B cell (primary cell): ENCODE measurements at regions of chr1 and their contacts with region 1.

Region 1: GRCh38 chr1:111769517-111770146 is 13.9 kb downstream of the DDX20 start:
- DNase-seq: peak; percentile 78
- ATAC-seq: peak; percentile 51
- H3K4me3 ChIP-seq: no peak overlapping the region
- H3K4me3 Mint-ChIP-seq: no peak overlapping the region
- H3K27ac ChIP-seq: no peak overlapping the region
- H3K27ac Mint-ChIP-seq: no peak overlapping the region
- H3K4me1 ChIP-seq: no peaks in the 10 kb centered on the region
- H3K4me1 Mint-ChIP-seq: no peaks in the 10 kb centered on the region
- H3K27me3 ChIP-seq: no peaks in the 10 kb centered on the region
- H3K27me3 Mint-ChIP-seq: no peaks in the 10 kb centered on the region
- CTCF ChIP-seq: peak; percentile 95

Region 2: GRCh38 chr1:111366256-111366655 is 403.4 kb before region 1 on chr1:
- CTCF ChIA-PET with region 1: no interaction called
- POLR2A ChIA-PET with region 1: no interaction called
- intact Hi-C with region 1: no loop called
- DNase-seq: no peak
- ATAC-seq: no peak
- H3K4me3 ChIP-seq: no peak overlapping the region
- H3K4me3 Mint-ChIP-seq: no peak overlapping the region
- H3K27ac ChIP-seq: no peak overlapping the region
- H3K27ac Mint-ChIP-seq: no peak overlapping the region
- H3K4me1 ChIP-seq: no peaks in the 10 kb centered on the region
- H3K4me1 Mint-ChIP-seq: no peaks in the 10 kb centered on the region
- H3K27me3 ChIP-seq: peaks cover 0 to 10% (median 8%) of the 10 kb centered on the region in 4 experiments
- H3K27me3 Mint-ChIP-seq: peaks cover 44% of the 10 kb centered on the region
- CTCF ChIP-seq: no peak

Region 3: DNA sequence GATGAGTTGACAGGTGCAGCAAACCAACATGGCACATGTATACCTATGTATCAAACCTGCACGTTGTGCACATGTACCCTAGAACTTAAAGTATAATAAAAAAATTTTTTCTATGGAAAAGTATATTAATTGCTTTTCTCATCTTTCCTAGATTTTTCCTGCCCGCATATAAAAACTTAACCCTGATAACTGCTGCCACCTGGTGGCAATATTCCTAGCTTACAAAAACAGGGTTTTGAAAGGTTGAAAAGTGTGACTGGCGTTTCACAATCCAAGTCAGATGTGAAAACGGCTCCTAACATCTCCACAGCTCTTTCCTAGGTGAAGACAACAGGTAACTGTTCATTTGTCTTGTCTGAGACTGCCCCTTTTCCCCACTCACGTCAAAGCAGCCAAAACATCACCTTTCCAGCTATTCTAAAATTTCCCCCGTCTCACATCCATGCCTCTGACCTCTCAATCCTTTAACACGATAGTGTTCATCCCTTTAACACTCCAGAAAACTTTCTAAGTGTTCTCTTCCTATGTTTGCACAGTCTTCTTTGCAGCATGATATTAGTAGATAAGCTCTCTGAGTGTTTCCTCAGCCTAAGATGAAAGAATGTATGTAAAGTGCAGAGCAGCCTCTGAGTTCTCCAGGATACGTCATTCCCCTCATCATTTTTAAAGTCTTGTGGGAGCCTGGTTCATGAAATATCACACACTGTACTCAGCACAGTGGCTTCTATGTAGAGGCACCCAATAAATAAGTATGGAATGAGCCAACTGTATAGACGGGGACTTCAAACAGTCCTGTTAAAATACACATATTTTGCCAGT is 369.6 kb before region 1 on chr1:
- CTCF ChIA-PET with region 1: interaction called, 16 read pairs
- POLR2A ChIA-PET with region 1: no interaction called
- intact Hi-C with region 1: no loop called
- DNase-seq: peak; percentile 61
- ATAC-seq: no peak
- H3K4me3 ChIP-seq: no peak overlapping the region
- H3K4me3 Mint-ChIP-seq: no peak overlapping the region
- H3K27ac ChIP-seq: no peak overlapping the region
- H3K27ac Mint-ChIP-seq: peak overlapping the region; percentile 8
- H3K4me1 ChIP-seq: peaks cover 12 to 15% of the 10 kb centered on the region in 2 donors
- H3K4me1 Mint-ChIP-seq: peaks cover 24% of the 10 kb centered on the region
- H3K27me3 ChIP-seq: no peaks in the 10 kb centered on the region
- H3K27me3 Mint-ChIP-seq: no peaks in the 10 kb centered on the region
- CTCF ChIP-seq: peak; percentile 70

Region 4: DNA sequence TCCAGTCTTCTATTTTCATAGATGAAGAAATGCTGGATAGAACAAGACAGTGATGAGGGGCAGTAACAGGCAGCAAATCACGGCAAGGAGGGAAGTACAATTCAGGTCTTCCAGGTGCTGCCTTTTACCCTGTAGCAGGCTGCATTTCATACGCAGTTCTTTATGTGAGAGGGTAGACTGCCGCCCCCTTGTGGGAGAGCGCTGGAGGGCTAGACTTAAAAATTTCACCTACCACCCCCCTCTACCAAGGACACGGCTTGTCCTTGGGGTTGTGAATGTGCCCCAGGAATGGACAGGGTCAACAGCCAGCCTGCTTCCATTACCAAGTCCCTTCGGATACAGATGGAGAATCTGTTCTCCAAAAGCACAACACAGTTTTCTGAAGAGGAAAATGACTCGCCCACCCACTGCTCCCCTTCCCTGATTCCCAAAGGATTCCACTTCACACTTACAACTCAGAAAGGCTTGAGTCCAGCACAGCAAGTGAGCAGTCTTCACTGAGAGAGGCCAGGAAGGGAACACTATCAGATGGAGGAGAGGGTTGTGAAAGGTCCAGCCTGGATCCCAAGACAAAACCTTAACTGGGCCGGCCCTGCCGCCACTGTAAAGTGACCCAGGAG is 327.9 kb before region 1 on chr1:
- CTCF ChIA-PET with region 1: interaction called, 5 read pairs
- POLR2A ChIA-PET with region 1: no interaction called
- intact Hi-C with region 1: loop called (anchors 1 kb)
- DNase-seq: peak; percentile 79
- ATAC-seq: peak; percentile 92
- H3K4me3 ChIP-seq: no peak overlapping the region
- H3K4me3 Mint-ChIP-seq: no peak overlapping the region
- H3K27ac ChIP-seq: peak overlapping the region in 1 of 2 donors; percentile 39
- H3K27ac Mint-ChIP-seq: peak overlapping the region; percentile 27
- H3K4me1 ChIP-seq: peaks cover 0 to 4% of the 10 kb centered on the region in 2 donors
- H3K4me1 Mint-ChIP-seq: peaks cover 16% of the 10 kb centered on the region
- H3K27me3 ChIP-seq: no peaks in the 10 kb centered on the region
- H3K27me3 Mint-ChIP-seq: no peaks in the 10 kb centered on the region
- CTCF ChIP-seq: peak; percentile 84

Region 5: DNA sequence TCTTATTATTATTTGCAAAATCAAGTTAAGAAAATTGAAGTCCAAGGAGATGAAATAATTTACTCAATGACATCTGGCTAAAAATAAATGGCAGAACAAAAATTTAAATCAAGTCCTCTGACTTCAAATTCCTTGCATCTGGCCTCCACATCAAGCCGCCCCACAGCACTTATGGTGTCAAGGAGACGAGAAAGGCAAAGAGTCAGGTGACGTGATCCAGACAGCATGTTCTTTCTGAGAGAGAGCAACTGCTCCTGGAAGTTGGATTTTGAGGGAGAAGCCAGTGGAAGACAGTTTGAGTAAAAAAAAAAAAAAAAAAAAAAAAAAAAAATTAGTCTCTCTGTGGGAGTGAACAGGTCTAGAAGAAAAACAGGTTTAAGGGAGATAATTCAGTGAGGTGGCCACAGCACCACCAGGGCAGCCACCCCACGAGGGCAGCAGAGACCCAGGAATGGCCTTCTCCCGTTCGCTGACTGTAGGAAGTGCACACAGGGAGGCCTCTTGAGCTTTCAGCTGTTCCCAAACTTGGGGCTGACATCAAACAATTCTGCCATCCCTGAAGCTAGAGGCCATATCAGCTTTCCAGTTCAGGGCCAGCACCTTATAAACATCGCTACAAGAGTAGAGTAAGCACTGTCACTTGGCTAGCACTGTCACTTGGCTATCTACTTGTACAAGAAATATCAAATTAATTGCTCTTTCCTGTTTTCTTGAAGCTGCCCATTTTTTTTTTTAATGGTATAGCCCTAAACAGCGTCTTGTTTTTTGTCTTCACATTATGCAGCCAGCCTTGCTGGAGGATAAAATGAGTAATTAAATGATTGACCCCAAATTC is 288.0 kb before region 1 on chr1:
- CTCF ChIA-PET with region 1: interaction called, 71 read pairs
- POLR2A ChIA-PET with region 1: no interaction called
- intact Hi-C with region 1: loop called (anchors 1 kb)
- DNase-seq: peak; percentile 76
- ATAC-seq: peak; percentile 52
- H3K4me3 ChIP-seq: no peak overlapping the region
- H3K4me3 Mint-ChIP-seq: no peak overlapping the region
- H3K27ac ChIP-seq: no peak overlapping the region
- H3K27ac Mint-ChIP-seq: peak overlapping the region; percentile 43
- H3K4me1 ChIP-seq: peaks cover 38 to 42% of the 10 kb centered on the region in 2 donors
- H3K4me1 Mint-ChIP-seq: peaks cover 46% of the 10 kb centered on the region
- H3K27me3 ChIP-seq: no peaks in the 10 kb centered on the region
- H3K27me3 Mint-ChIP-seq: no peaks in the 10 kb centered on the region
- CTCF ChIP-seq: peak; percentile 55

Region 6: DNA sequence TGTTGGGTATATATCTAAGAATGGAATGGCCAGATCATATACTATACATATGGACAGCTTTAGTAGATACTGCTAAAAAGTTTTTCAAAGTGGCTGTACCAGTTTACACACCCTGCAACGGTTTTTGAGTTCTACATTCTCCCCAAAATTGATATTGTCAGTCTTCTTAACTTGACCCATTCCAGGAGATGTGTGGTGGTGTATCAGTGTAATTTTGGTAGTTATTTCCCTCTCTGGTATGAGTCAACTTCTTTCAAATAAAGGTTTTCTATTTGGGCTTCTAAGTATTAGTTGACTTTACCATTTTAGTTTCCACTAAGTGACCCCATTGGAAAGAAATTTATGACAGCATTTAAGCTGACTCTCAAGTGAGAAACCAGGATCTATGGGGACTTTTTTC is 59.6 kb before region 1 on chr1:
- CTCF ChIA-PET with region 1: interaction called, 198 read pairs
- POLR2A ChIA-PET with region 1: no interaction called
- intact Hi-C with region 1: loop called (anchors 1 kb)
- DNase-seq: no peak
- ATAC-seq: no peak
- H3K4me3 ChIP-seq: no peak overlapping the region
- H3K4me3 Mint-ChIP-seq: no peak overlapping the region
- H3K27ac ChIP-seq: peak overlapping the region in 1 of 2 donors; percentile 21
- H3K27ac Mint-ChIP-seq: no peak overlapping the region
- H3K4me1 ChIP-seq: no peaks in the 10 kb centered on the region
- H3K4me1 Mint-ChIP-seq: no peaks in the 10 kb centered on the region
- H3K27me3 ChIP-seq: no peaks in the 10 kb centered on the region
- H3K27me3 Mint-ChIP-seq: no peaks in the 10 kb centered on the region
- CTCF ChIP-seq: no peak

Region 7: DNA sequence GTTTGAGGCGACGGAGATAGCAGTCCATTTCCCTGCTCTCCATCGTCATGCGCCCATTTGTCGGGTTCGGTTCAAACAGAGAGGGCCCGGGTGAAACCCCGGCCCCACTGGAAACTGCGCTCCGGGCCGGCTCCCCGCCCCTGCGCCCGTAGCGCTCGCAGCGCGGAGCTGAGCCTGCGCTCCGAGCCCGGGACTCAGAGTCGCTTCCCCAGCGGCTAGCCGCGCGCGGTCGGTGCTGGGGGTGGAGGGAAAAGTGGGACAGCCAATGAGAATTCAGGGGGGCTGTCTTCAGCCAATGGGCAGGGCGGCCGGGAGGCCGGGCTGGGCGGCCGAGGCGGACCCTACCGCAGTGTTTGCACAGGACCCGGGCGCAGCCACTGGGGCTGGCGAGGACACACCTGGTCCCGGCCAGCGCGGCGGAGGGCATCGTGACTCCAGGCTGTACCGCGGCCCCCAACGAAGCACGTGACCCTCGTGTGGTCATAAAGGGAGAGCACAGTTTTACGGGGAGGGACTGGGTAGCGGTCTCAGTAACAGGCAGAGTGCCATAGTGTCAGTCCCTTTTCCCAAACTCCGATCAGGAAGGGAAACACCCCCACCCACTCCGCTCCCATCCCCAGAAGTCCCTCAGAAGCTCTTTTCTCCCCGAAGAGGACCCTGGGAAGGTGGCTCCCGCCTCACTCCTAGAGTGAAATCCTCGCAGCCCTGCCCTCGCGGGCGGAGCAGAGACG is 30.3 kb before region 1 on chr1 and contains the start of gene INKA2:
- CTCF ChIA-PET with region 1: interaction called, 14 read pairs
- POLR2A ChIA-PET with region 1: no interaction called
- intact Hi-C with region 1: loop called (anchors 1 kb)
- DNase-seq: peak; percentile 89
- ATAC-seq: peak; percentile 75
- H3K4me3 ChIP-seq: peak within 1 kb of the TSS; percentile 67 to 81 (median 72)
- H3K4me3 Mint-ChIP-seq: peak within 1 kb of the TSS; percentile 97
- H3K27ac ChIP-seq: peak within 1 kb of the TSS; percentile 60 to 73
- H3K27ac Mint-ChIP-seq: peak within 1 kb of the TSS; percentile 91
- H3K4me1 ChIP-seq: peaks cover 15 to 25% of the 10 kb centered on the region in 2 donors
- H3K4me1 Mint-ChIP-seq: peaks cover 23% of the 10 kb centered on the region
- H3K27me3 ChIP-seq: peaks cover 0 to 39% (median 15%) of the 10 kb centered on the region in 4 experiments
- H3K27me3 Mint-ChIP-seq: peaks cover 6% of the 10 kb centered on the region
- CTCF ChIP-seq: no peak
- total RNA-seq, gene INKA2: 6.4 and 6.5 TPM in 2 replicates

Region 8: GRCh38 chr1:111755331-111756123 is 14.1 kb before region 1 on chr1 and contains the start of gene DDX20:
- CTCF ChIA-PET with region 1: interaction called, 10 read pairs
- POLR2A ChIA-PET with region 1: no interaction called
- intact Hi-C with region 1: loop called (anchors 1 kb)
- DNase-seq: peak; percentile 98
- ATAC-seq: peak; percentile 92
- H3K4me3 ChIP-seq: peak within 1 kb of the TSS; percentile 62 to 95 (median 74)
- H3K4me3 Mint-ChIP-seq: peak within 1 kb of the TSS; percentile 88
- H3K27ac ChIP-seq: peak within 1 kb of the TSS; percentile 91 to 96
- H3K27ac Mint-ChIP-seq: peak within 1 kb of the TSS; percentile 94
- H3K4me1 ChIP-seq: peaks cover 14 to 16% of the 10 kb centered on the region in 2 donors
- H3K4me1 Mint-ChIP-seq: peaks cover 31% of the 10 kb centered on the region
- H3K27me3 ChIP-seq: no peaks in the 10 kb centered on the region
- H3K27me3 Mint-ChIP-seq: no peaks in the 10 kb centered on the region
- CTCF ChIP-seq: peak; percentile 95
- total RNA-seq, gene DDX20: 22.3 and 24.6 TPM in 2 replicates